ENCODE measurements at regions of chr9 and their contacts with region 1.

Region 1: DNA sequence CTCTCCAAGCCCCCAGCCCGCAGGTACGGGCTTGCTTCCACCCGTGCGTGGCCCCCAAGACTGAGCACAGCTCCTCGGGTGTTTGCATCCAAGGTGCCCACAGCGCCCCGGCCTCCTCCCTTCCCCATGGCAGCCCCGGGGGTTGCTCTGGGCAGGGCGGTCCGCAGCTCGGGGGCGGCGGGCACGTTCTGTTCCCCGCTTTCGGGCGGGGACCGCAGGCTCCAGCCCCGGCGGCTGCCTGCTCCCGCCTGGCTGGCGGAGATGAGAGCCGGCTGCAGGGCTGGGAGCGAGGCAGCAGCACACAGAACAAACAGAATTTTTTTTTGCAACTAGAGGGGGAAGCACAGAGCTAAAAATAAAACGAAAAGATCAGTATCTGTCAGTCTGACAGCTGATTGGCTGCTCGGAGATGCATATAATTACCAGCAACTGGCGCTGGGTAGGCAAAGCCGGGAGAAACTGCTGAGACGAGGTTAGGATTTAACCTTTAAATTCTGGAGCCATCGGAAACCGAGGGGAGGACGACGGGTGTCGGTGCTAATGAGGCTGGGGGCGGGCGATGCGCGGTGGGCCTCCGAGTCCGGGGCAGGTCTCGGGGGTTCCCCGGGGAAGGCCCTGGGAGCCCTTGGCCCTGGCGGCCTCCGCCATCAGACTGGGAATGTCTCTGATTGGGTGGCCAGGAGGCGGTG is 142.7 kb upstream of the IER5L start:
- DNase-seq: peak; percentile 86
- H3K4me3 ChIP-seq: peak overlapping the region; percentile 29 to 44
- H3K27ac ChIP-seq: peak overlapping the region; percentile 85 to 89
- H3K4me1 ChIP-seq: peaks cover 8% of the 10 kb centered on the region
- H3K27me3 ChIP-seq: no peaks in the 10 kb centered on the region
- CTCF ChIP-seq: peak in 2 of 4 experiments; percentile 38 to 59
- POLR2A ChIP-seq: peak; percentile 82

Region 2: DNA sequence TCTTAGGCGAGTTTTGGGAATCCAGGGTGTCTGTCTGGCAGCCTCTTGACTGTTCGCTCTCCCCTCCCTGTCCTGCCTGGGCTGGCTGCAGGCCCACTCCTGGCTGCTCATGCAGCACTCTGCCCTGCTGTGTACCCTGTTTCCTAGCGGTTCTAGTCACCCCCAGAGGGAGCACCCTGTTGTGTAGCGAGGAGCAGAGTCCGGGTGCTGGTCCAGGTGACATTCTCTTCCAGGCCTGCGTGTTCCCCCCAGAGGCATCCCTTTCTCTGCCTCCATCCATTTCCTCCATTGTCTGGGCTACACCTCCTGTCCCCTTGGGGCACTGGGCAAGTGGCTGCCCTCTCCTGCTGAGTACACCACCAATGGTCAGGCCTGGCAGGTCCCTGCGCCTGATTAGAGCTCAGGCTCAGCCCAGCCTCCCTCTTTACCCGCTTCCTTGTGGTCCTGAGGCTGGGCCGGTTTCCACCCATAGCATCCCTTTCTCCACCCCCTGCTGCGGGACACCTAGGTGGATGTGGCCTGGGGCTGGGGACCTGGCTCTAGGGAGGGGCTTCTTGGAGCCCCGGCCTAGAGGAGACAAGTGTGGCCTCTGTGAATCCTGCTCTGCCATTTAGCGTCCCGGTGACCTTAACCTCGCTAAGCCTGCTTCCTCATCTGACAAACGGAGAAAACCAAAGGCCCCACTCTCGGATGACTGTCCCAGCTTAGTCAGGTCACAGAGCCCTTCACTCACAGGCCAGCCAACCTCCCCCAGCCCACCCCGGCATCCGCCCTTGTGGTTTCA is 227.1 kb before region 1 on chr9:
- intact Hi-C with region 1: no loop called
- DNase-seq: no peak
- H3K4me3 ChIP-seq: no peak overlapping the region
- H3K27ac ChIP-seq: no peak overlapping the region
- H3K4me1 ChIP-seq: no peaks in the 10 kb centered on the region
- H3K27me3 ChIP-seq: no peaks in the 10 kb centered on the region
- CTCF ChIP-seq: no peak
- POLR2A ChIP-seq: no peak

Region 3: GRCh38 chr9:129225815-129226214 is 94.9 kb before region 1 on chr9:
- intact Hi-C with region 1: no loop called
- DNase-seq: no peak
- H3K4me3 ChIP-seq: no peak overlapping the region
- H3K27ac ChIP-seq: no peak overlapping the region
- H3K4me1 ChIP-seq: no peaks in the 10 kb centered on the region
- H3K27me3 ChIP-seq: no peaks in the 10 kb centered on the region
- CTCF ChIP-seq: no peak
- POLR2A ChIP-seq: no peak

Region 4: GRCh38 chr9:129413537-129414376 is 93.0 kb after region 1 on chr9:
- intact Hi-C with region 1: loop called (anchors 5 kb)
- DNase-seq: peak; percentile 99
- H3K4me3 ChIP-seq: peak overlapping the region; percentile 55 to 58
- H3K27ac ChIP-seq: peak overlapping the region; percentile 99
- H3K4me1 ChIP-seq: peaks cover 13% of the 10 kb centered on the region
- H3K27me3 ChIP-seq: no peaks in the 10 kb centered on the region
- CTCF ChIP-seq: peak in 2 of 4 experiments; percentile 18 to 23
- POLR2A ChIP-seq: peak; percentile 94

Region 5: GRCh38 chr9:129460323-129461261 is 139.9 kb after region 1 on chr9:
- intact Hi-C with region 1: loop called (anchors 5 kb)
- DNase-seq: peak; percentile 93
- H3K4me3 ChIP-seq: peak overlapping the region; percentile 18 to 31
- H3K27ac ChIP-seq: peak overlapping the region; percentile 94 to 98
- H3K4me1 ChIP-seq: peaks cover 20% of the 10 kb centered on the region
- H3K27me3 ChIP-seq: no peaks in the 10 kb centered on the region
- CTCF ChIP-seq: peak in 2 of 4 experiments; percentile 29 to 46
- POLR2A ChIP-seq: peak; percentile 80

Region 6: DNA sequence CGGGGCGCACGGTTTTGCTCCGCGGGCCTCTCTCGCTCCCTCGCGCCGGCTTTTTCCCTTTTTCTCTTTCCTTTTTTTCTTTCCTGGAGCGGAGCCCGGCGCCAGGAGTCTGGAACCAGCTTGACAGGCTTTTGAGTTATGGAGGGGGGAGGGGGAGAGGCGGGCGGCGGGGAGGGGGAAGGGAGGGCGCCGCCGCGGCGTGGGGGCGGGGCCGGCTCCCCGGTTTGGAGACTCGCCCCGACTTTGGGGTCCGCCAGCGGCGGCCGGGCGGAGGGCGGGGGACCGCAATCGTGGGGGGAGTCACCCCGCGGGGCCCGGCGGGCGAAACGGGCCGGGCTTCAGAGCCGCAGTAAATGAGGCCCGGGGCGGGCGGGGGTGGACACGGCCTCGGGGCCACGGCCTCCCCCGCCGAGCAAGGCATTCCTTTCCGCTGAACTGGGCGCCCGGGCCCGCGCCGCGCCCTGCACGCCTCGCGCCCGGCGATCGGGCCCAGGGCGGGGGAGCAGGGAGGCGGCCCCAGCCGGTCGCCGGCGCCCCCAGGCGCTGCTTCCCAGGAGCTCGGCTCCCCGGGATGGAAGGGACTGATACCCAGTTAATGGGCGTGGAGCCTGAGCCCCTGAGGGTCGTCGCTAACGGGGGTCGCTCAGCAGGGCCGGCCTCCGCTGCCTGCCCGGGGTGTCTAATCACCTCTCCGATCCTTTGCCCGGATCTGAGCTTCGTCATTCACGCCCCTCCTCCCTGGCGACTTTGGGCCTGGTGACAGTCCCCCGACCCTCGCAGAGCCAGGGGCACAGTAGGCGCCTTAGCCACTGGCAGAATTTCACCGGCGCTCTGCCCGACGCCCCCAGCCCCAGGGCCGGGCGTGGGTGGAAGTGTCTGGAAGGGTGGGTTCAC is 162.0 kb after region 1 on chr9:
- intact Hi-C with region 1: loop called (anchors 5 kb)
- DNase-seq: peak; percentile 88
- H3K4me3 ChIP-seq: peak overlapping the region; percentile 51 to 53
- H3K27ac ChIP-seq: peak overlapping the region; percentile 99 to 100
- H3K4me1 ChIP-seq: peaks cover 36% of the 10 kb centered on the region
- H3K27me3 ChIP-seq: no peaks in the 10 kb centered on the region
- CTCF ChIP-seq: peak in 1 of 4 experiments; percentile 22
- POLR2A ChIP-seq: peak; percentile 19

Region 7: GRCh38 chr9:129495534-129496325 is 175.0 kb after region 1 on chr9:
- intact Hi-C with region 1: loop called (anchors 5 kb)
- DNase-seq: peak; percentile 93
- H3K4me3 ChIP-seq: peak overlapping the region; percentile 29 to 55
- H3K27ac ChIP-seq: peak overlapping the region; percentile 99 to 100
- H3K4me1 ChIP-seq: peaks cover 38% of the 10 kb centered on the region
- H3K27me3 ChIP-seq: no peaks in the 10 kb centered on the region
- CTCF ChIP-seq: peak in 1 of 4 experiments; percentile 26
- POLR2A ChIP-seq: no peak

Region 8: GRCh38 chr9:129610473-129611301 is 290.0 kb after region 1 on chr9:
- intact Hi-C with region 1: loop called (anchors 5 kb)
- DNase-seq: peak; percentile 62
- H3K4me3 ChIP-seq: peak overlapping the region; percentile 64 to 69
- H3K27ac ChIP-seq: peak overlapping the region; percentile 89 to 94
- H3K4me1 ChIP-seq: peaks cover 6% of the 10 kb centered on the region
- H3K27me3 ChIP-seq: no peaks in the 10 kb centered on the region
- CTCF ChIP-seq: peak; percentile 93 to 100 (median 98)
- POLR2A ChIP-seq: peak; percentile 20

Measured in prostate gland (tissue), 2 donors.